Activated CD4-positive, alpha-beta T cell treated with anti-CD3 and anti-CD28 coated beads, Interleukin-2, amount 10 ng/mL, durations not matched to agents 24 days and 14 days (primary cell): ENCODE measurements at regions of chr15 and their contacts with region 1.

Region 1: DNA sequence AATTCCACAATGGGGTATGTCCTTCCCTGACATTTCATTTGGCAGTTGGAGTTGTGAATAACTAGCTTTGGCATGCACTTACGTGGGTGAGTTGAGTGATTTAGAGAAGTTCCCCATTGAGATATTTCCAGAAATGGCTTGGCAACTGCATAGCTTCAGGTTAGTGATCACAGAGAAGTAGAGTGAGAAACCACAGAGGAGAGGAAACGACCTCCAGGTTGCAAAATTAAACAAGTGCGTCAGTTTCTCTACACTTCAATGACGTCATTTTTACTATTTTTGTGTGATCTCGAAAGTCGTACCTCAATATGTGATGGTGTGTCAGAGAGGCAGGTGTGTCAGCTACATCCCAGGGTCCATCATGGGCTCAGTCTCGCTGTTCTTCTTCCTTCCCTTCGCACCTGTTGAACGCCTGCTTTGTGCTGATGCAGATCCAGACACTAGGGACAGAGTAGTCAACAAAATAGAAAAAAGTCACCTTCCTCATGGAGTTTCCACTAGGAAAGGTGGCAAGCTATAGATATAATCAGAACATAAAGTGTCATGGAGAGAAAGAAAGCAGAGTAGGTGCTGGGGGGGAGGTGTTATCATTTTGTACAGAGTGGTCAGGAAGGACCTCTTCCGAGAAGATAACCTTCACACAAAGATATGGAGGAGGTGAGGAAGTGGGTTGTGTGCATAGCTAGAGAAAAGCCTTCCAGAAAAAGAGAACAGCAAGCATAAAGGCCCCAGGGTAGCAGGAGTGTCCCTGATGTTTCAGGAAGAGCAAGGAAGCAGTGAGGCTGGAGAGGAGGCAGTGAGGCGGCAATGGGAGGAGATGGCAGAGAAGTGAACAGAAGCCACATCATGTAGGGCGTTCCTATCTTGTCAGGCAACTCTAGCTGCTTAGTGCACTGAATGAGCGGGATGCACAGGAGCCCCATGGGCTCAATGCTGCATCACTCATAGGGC is 75.6 kb downstream of the MCTP2 start:
- DNase-seq: peak; percentile 74
- H3K4me3 Mint-ChIP-seq: peak overlapping the region; percentile 44
- H3K27ac Mint-ChIP-seq: peak overlapping the region; percentile 92
- H3K4me1 Mint-ChIP-seq: peaks cover 57% of the 10 kb centered on the region
- H3K27me3 Mint-ChIP-seq: no peaks in the 10 kb centered on the region

Region 2: DNA sequence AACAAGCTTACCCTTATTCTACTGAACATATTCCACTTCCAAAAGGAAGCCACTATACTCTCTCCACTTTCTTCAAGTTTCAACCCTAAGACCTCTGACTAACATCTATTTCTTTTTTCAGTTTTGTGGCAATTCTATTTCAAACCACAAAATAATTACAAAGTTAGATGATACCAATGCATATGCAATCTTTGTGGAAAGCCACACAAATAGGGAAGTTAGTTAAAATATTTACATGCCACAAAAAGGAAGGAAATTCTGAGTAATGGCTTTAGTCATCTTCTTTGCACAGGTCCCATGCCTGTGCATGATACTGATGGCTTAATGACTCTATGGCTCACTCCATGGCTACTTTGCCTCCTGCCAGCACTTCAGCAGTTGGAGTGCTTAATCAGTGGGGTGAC is 132.6 kb before region 1 on chr15:
- intact Hi-C with region 1: loop called (anchors 1 kb)
- DNase-seq: peak; percentile 66
- H3K4me3 Mint-ChIP-seq: peak overlapping the region; percentile 28
- H3K27ac Mint-ChIP-seq: peak overlapping the region; percentile 8
- H3K4me1 Mint-ChIP-seq: peaks cover 39% of the 10 kb centered on the region
- H3K27me3 Mint-ChIP-seq: no peaks in the 10 kb centered on the region

Region 3: GRCh38 chr15:94206463-94207167 is 100.4 kb before region 1 on chr15:
- intact Hi-C with region 1: loop called (anchors 1 kb)
- DNase-seq: peak; percentile 89
- H3K4me3 Mint-ChIP-seq: peak overlapping the region; percentile 80
- H3K27ac Mint-ChIP-seq: peak overlapping the region; percentile 96
- H3K4me1 Mint-ChIP-seq: peaks cover 27% of the 10 kb centered on the region
- H3K27me3 Mint-ChIP-seq: peaks cover 7% of the 10 kb centered on the region

Region 4: DNA sequence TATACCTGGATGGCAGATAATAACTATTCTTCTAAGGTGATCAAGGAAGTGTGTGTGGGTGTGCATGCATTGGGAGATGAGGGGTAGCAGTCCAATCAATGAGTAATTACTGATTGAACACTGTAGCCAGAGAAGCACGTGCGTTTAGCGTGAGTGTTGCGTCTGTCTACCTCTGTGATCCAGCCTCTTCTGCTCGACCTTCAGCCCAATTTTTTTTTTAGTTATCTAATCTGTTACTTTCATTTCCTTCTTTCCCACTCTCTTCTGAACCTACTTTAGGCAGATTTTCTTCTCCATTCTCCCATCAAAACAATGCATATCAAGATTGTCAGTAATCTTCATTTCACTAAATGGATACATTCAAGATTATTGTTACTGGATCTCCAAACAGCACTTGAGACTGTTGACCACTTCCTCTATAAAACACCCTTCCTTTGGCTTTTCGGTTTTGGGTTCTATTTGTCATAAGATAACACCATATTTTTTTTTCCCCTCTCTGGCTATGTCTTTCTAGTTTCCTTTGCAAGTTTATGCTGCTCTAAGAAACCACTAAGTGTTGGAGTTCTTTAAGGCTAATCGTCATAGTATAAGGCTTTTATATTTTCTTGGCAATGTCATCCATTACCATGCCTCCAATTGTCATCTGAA is 34.6 kb before region 1 on chr15:
- intact Hi-C with region 1: loop called (anchors 1 kb)
- DNase-seq: no peak
- H3K4me3 Mint-ChIP-seq: no peak overlapping the region
- H3K27ac Mint-ChIP-seq: no peak overlapping the region
- H3K4me1 Mint-ChIP-seq: peaks cover 17% of the 10 kb centered on the region
- H3K27me3 Mint-ChIP-seq: no peaks in the 10 kb centered on the region

Region 5: DNA sequence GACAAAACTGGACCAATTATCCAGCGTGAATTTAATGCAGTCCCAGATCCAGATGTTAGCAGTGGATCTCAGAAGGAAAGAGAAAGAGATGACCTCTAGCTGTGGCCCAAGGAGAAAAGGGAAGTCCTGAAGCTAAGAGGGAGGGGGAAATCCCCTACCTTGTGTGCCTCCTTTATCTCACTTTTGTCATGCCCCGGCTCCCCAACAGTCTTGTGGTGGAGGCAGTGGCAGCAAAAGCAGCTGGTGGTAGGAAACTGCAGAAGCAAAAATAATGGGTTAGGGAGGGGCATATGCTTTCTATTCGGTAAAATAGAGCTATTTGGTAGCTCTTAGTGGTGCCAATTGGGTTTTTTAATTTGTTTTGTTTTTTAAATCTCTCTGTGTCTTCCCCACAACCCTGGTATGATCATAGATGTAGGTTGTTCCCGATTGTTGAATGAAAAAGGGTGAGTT is 19.2 kb before region 1 on chr15:
- intact Hi-C with region 1: loop called (anchors 1 kb)
- DNase-seq: peak; percentile 89
- H3K4me3 Mint-ChIP-seq: peak overlapping the region; percentile 81
- H3K27ac Mint-ChIP-seq: peak overlapping the region; percentile 86
- H3K4me1 Mint-ChIP-seq: peaks cover 43% of the 10 kb centered on the region
- H3K27me3 Mint-ChIP-seq: no peaks in the 10 kb centered on the region

Region 6: DNA sequence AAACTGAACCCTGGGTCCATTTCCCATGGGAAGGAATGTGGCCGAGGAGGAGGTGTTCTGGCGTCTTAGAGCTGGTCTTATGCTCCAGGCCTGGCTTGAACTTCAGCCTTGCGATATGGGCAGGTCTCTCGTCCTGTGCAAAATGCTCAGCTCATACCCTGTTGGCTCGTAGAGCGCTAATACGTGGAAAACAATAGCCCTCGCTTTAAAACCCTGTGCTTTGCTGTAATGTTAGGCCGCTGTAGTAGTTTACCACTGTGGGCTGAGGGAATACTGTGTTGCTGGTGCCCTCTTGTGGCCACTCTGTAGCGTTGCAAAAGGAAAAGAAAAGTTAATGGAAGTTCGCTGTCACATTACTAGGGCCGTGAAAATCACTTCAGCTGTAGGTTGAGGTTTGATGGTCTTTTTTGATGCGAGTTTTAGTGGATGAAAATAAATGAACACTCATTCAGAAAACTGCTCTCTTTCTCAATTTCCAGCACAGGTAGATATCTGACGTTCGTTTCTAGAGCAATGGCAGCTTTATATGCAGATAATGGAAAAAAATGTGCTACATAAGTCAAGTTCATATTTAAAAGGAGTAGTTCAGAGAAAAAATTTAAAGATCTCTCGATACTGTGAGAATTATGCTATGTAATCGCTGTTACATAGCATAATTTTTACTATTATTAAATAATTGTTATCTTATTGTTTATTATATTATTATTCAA is 17.3 kb after region 1 on chr15:
- intact Hi-C with region 1: loop called (anchors 1 kb)
- DNase-seq: peak; percentile 86
- H3K4me3 Mint-ChIP-seq: peak overlapping the region; percentile 28
- H3K27ac Mint-ChIP-seq: no peak overlapping the region
- H3K4me1 Mint-ChIP-seq: peaks cover 25% of the 10 kb centered on the region
- H3K27me3 Mint-ChIP-seq: no peaks in the 10 kb centered on the region

Region 7: GRCh38 chr15:94370206-94370935 is 63.4 kb after region 1 on chr15:
- intact Hi-C with region 1: no loop called
- DNase-seq: no peak
- H3K4me3 Mint-ChIP-seq: no peak overlapping the region
- H3K27ac Mint-ChIP-seq: no peak overlapping the region
- H3K4me1 Mint-ChIP-seq: peaks cover 4% of the 10 kb centered on the region
- H3K27me3 Mint-ChIP-seq: no peaks in the 10 kb centered on the region